Activated CD4-positive, alpha-beta memory T cell treated with anti-CD3 and anti-CD28 coated beads, Interleukin-2, amount 10 ng/mL, durations not matched to agents 7 days and 5 days (primary cell): ENCODE measurements at regions of chr12 and their contacts with region 1.

Region 1: GRCh38 chr12:122752464-122753318 is at the start of gene DENR:
- DNase-seq: peak; percentile 100
- H3K4me3 Mint-ChIP-seq: peak within 1 kb of the TSS; percentile 86
- H3K27ac Mint-ChIP-seq: peak within 1 kb of the TSS; percentile 83
- H3K4me1 Mint-ChIP-seq: peaks cover 48% of the 10 kb centered on the region
- H3K27me3 Mint-ChIP-seq: no peaks in the 10 kb centered on the region
- total RNA-seq, gene DENR: 52.5 to 55.9 TPM

Region 2: DNA sequence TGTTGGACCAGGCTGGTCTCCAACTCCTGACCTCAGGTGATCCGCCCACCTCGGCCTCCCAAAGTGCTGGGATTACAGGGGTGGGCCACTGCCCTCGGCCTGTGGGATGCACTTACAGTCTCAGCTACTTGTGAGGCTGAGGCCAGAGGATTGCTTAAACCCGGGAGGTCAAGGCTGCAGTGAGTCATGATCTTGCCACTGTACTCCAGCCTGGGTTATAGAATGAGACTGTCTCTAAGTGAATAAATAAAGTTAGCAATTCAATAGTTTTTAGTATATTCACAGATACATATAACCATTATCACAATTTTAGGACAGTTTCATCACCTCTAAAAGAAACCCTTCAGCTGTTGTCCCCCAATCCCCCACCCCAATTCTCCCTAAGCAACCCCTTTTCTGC is 110.7 kb before region 1 on chr12:
- CTCF ChIA-PET with region 1: interaction called, 13 read pairs
- POLR2A ChIA-PET with region 1: no interaction called
- DNase-seq: no peak
- H3K4me3 Mint-ChIP-seq: no peak overlapping the region
- H3K27ac Mint-ChIP-seq: no peak overlapping the region
- H3K4me1 Mint-ChIP-seq: peaks cover 11% of the 10 kb centered on the region
- H3K27me3 Mint-ChIP-seq: no peaks in the 10 kb centered on the region

Region 3: DNA sequence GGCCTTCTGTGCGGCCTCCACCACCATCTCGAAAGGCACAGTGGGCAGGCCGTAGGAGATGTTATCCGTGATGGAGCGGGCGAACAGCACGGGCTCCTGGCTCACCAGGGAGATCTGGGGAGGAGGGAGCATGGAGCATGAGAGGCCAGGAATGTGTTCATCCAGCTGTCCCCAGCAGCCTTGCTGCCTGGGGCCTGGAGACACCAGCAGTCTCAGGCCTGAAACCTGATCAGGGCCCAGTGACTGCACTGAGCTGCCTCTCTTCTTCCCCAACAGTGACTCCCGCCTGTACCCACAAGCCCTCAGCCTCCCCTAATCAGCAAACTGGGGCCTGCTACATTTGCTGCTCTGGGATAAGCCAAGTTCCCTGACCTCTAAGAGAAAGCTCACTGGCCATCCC is 182.6 kb after region 1 on chr12:
- CTCF ChIA-PET with region 1: no interaction called
- POLR2A ChIA-PET with region 1: no interaction called
- DNase-seq: no peak
- H3K4me3 Mint-ChIP-seq: no peak overlapping the region
- H3K27ac Mint-ChIP-seq: no peak overlapping the region
- H3K4me1 Mint-ChIP-seq: no peaks in the 10 kb centered on the region
- H3K27me3 Mint-ChIP-seq: no peaks in the 10 kb centered on the region